ENCODE measurements at regions of chr19 and their contacts with region 1.

Region 1: GRCh38 chr19:18636183-18636968 is 452 bp upstream of the KLHL26 start:
- DNase-seq: peak; percentile 98 to 100 (median 99)
- ATAC-seq: peak; percentile 86
- H3K4me3 ChIP-seq: peak overlapping the region; percentile 81
- H3K4me3 Mint-ChIP-seq: peak overlapping the region; percentile 91
- H3K27ac ChIP-seq: peak overlapping the region; percentile 39 to 72
- H3K27ac Mint-ChIP-seq: peak overlapping the region; percentile 83
- H3K4me1 ChIP-seq: peaks cover 34% of the 10 kb centered on the region
- H3K4me1 Mint-ChIP-seq: peaks cover 35% of the 10 kb centered on the region
- H3K27me3 ChIP-seq: no peaks in the 10 kb centered on the region
- H3K27me3 Mint-ChIP-seq: no peaks in the 10 kb centered on the region
- CTCF ChIP-seq: no peak

Region 2: GRCh38 chr19:18529782-18530181 is 106.6 kb before region 1 on chr19:
- CTCF ChIA-PET with region 1: no interaction called
- POLR2A ChIA-PET with region 1: no interaction called
- intact Hi-C with region 1: no loop called
- DNase-seq: no peak
- ATAC-seq: no peak
- H3K4me3 ChIP-seq: no peak overlapping the region
- H3K4me3 Mint-ChIP-seq: no peak overlapping the region
- H3K27ac ChIP-seq: no peak overlapping the region
- H3K27ac Mint-ChIP-seq: no peak overlapping the region
- H3K4me1 ChIP-seq: no peaks in the 10 kb centered on the region
- H3K4me1 Mint-ChIP-seq: no peaks in the 10 kb centered on the region
- H3K27me3 ChIP-seq: no peaks in the 10 kb centered on the region
- H3K27me3 Mint-ChIP-seq: no peaks in the 10 kb centered on the region
- CTCF ChIP-seq: no peak

Region 3: GRCh38 chr19:18571564-18572300 is 64.6 kb before region 1 on chr19 and contains the start of gene UBA52:
- CTCF ChIA-PET with region 1: no interaction called
- POLR2A ChIA-PET with region 1: no interaction called
- intact Hi-C with region 1: loop called in 1 of 2 experiments (anchors 2 kb)
- DNase-seq: peak; percentile 96 to 100 (median 98)
- ATAC-seq: peak; percentile 91
- H3K4me3 ChIP-seq: peak within 1 kb of the TSS; percentile 97
- H3K4me3 Mint-ChIP-seq: peak within 1 kb of the TSS; percentile 91
- H3K27ac ChIP-seq: peak within 1 kb of the TSS; percentile 89 to 94
- H3K27ac Mint-ChIP-seq: peak within 1 kb of the TSS; percentile 93
- H3K4me1 ChIP-seq: peaks cover 28% of the 10 kb centered on the region
- H3K4me1 Mint-ChIP-seq: peaks cover 20% of the 10 kb centered on the region
- H3K27me3 ChIP-seq: no peaks in the 10 kb centered on the region
- H3K27me3 Mint-ChIP-seq: no peaks in the 10 kb centered on the region
- CTCF ChIP-seq: no peak
- total RNA-seq, gene UBA52: 2,255 to 2,378 TPM

Region 4: DNA sequence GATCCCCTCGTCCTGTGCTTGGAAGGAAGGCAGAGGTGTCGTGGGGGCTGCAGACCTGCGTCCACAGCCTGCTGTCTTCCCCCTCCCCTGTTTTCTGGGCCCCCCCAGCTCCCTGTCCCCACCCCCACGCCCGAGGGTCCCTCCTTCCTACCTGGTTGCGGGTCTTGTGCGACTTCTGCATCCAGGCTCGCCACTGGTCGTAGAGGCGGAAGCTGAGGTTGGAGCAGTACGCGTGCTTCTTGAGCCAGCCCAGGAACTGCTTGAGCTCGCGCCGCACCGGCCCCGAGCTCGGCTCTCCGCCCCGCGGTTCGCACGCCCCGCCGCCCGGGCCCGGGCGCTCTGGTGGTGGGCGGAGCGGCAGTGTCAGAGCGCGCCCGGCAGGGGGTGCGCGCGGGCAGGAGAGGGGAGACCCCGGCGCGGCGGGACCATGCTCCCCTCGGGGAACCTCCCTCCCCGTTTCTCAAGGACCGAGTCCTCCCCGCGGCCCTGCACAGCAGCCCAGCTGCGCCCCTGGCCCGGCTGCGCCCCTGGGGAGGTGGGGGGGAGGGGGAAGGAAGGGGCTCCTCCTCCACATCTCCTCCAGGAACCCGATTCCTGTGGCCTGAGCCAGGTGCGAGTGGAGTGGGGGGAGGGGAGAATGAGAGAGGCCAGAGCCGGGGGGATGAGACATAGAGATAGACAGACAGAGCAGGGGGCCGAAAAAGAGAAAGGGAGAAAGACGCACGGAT is 42.1 kb before region 1 on chr19:
- CTCF ChIA-PET with region 1: interaction called, 4 read pairs
- POLR2A ChIA-PET with region 1: interaction called, 10 read pairs
- intact Hi-C with region 1: loop called in 1 of 2 experiments (anchors 1 kb)
- DNase-seq: peak; percentile 59 to 91 (median 70)
- ATAC-seq: peak; percentile 74
- H3K4me3 ChIP-seq: peak overlapping the region; percentile 52
- H3K4me3 Mint-ChIP-seq: peak overlapping the region; percentile 63
- H3K27ac ChIP-seq: no peak overlapping the region
- H3K27ac Mint-ChIP-seq: peak overlapping the region; percentile 42
- H3K4me1 ChIP-seq: peaks cover 40% of the 10 kb centered on the region
- H3K4me1 Mint-ChIP-seq: peaks cover 25% of the 10 kb centered on the region
- H3K27me3 ChIP-seq: peaks cover 3 to 8% of the 10 kb centered on the region in 2 experiments
- H3K27me3 Mint-ChIP-seq: peaks cover 4% of the 10 kb centered on the region
- CTCF ChIP-seq: peak; percentile 73

Region 5: DNA sequence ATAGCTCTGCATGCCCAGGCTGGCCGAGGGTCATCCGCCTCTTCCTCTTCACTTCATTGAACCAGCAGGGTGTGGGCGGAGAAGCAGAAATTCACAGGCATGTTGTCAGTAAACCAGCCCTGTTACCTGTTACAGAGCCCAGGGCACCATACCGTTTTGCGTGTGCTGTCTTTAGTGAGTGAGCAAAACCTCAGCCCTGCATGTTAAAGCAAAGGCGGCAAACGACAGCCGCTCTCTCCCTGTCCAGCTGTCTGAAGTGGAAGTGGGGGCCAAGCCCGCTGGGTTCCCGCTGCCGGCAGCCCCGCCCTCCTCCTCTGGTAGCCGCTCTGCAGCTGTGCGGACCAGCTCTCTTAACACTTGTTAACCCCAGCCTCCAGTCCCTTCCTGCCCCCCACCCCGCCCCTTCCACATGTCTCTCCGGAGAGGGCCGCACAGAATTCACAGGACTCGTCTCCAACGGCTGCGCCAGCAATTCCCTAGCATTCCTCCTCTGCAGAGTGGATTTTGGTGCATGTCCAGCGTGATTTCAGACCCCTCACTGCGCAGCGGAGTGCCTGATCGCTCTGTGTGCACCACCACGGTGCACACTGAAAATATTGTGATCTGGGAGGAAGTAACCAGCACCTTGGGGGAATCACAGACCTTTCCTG is 13.1 kb after region 1 on chr19:
- CTCF ChIA-PET with region 1: no interaction called
- POLR2A ChIA-PET with region 1: no interaction called
- intact Hi-C with region 1: no loop called
- DNase-seq: no peak
- ATAC-seq: no peak
- H3K4me3 ChIP-seq: no peak overlapping the region
- H3K4me3 Mint-ChIP-seq: peak overlapping the region; percentile 20
- H3K27ac ChIP-seq: no peak overlapping the region
- H3K27ac Mint-ChIP-seq: no peak overlapping the region
- H3K4me1 ChIP-seq: peaks cover 9% of the 10 kb centered on the region
- H3K4me1 Mint-ChIP-seq: peaks cover 19% of the 10 kb centered on the region
- H3K27me3 ChIP-seq: no peaks in the 10 kb centered on the region
- H3K27me3 Mint-ChIP-seq: no peaks in the 10 kb centered on the region
- CTCF ChIP-seq: no peak

Region 6: DNA sequence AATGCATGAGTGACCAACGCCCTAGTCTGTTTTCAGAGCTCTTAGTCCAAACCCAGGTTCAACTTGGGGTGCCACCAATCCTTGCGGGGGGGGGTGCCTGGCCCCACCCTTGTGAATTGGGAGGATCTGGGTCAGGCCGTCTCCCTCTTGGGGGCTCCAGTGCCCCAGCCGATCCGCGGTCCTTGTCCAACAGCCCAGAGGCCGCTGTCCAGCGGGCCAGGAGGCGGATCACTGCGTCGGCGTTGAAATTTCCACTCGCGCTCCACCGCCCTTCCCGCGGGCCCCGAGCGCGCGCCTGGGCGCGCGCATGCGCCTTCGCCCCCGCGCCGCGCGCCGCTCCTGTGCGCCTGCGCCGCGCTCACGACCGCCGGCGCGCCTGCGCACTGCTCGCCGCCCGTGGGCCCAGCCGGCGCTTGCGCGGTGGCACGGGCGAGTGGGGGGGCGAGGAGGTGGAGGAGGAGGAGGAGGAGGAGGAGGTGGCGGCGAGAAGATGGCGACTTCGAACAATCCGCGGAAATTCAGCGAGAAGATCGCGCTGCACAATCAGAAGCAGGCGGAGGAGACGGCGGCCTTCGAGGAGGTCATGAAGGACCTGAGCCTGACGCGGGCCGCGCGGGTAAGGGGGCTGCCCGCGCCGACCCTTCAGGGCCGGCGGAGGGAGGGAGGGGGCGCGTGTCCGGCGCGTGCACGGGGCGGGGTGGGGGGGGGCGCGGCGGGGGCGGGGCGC is 47.0 kb after region 1 on chr19 and contains the start of gene CRTC1:
- CTCF ChIA-PET with region 1: no interaction called
- POLR2A ChIA-PET with region 1: no interaction called
- intact Hi-C with region 1: loop called in 1 of 2 experiments (anchors 1 kb)
- DNase-seq: peak; percentile 92 to 97 (median 94)
- ATAC-seq: peak; percentile 86
- H3K4me3 ChIP-seq: peak within 1 kb of the TSS; percentile 76
- H3K4me3 Mint-ChIP-seq: peak within 1 kb of the TSS; percentile 92
- H3K27ac ChIP-seq: peak within 1 kb of the TSS; percentile 29 to 65
- H3K27ac Mint-ChIP-seq: peak within 1 kb of the TSS; percentile 77
- H3K4me1 ChIP-seq: peaks cover 30% of the 10 kb centered on the region
- H3K4me1 Mint-ChIP-seq: peaks cover 36% of the 10 kb centered on the region
- H3K27me3 ChIP-seq: no peaks in the 10 kb centered on the region
- H3K27me3 Mint-ChIP-seq: no peaks in the 10 kb centered on the region
- CTCF ChIP-seq: no peak
- total RNA-seq, gene CRTC1: 11.8 to 12.2 TPM

Region 7: GRCh38 chr19:18700501-18701249 is 64.3 kb after region 1 on chr19:
- CTCF ChIA-PET with region 1: no interaction called
- POLR2A ChIA-PET with region 1: no interaction called
- intact Hi-C with region 1: loop called in 1 of 2 experiments (anchors 5 kb)
- DNase-seq: peak; percentile 59 to 81 (median 70)
- ATAC-seq: peak; percentile 97
- H3K4me3 ChIP-seq: peak overlapping the region; percentile 66
- H3K4me3 Mint-ChIP-seq: peak overlapping the region; percentile 91
- H3K27ac ChIP-seq: peak overlapping the region; percentile 59 to 87
- H3K27ac Mint-ChIP-seq: peak overlapping the region; percentile 88
- H3K4me1 ChIP-seq: peaks cover 43% of the 10 kb centered on the region
- H3K4me1 Mint-ChIP-seq: peaks cover 42% of the 10 kb centered on the region
- H3K27me3 ChIP-seq: no peaks in the 10 kb centered on the region
- H3K27me3 Mint-ChIP-seq: no peaks in the 10 kb centered on the region
- CTCF ChIP-seq: no peak

Region 8: GRCh38 chr19:18831524-18832305 is 195.3 kb after region 1 on chr19 and contains the start of gene UPF1:
- CTCF ChIA-PET with region 1: no interaction called
- POLR2A ChIA-PET with region 1: no interaction called
- intact Hi-C with region 1: loop called in 1 of 2 experiments (anchors 5 kb)
- DNase-seq: peak; percentile 90 to 99 (median 96)
- ATAC-seq: peak; percentile 75
- H3K4me3 ChIP-seq: peak within 1 kb of the TSS; percentile 64
- H3K4me3 Mint-ChIP-seq: peak within 1 kb of the TSS; percentile 89
- H3K27ac ChIP-seq: peak within 1 kb of the TSS; percentile 64 to 81
- H3K27ac Mint-ChIP-seq: peak within 1 kb of the TSS; percentile 88
- H3K4me1 ChIP-seq: peaks cover 45% of the 10 kb centered on the region
- H3K4me1 Mint-ChIP-seq: peaks cover 39% of the 10 kb centered on the region
- H3K27me3 ChIP-seq: no peaks in the 10 kb centered on the region
- H3K27me3 Mint-ChIP-seq: no peaks in the 10 kb centered on the region
- CTCF ChIP-seq: no peak
- total RNA-seq, gene UPF1: 146 to 150 TPM

Region 9: DNA sequence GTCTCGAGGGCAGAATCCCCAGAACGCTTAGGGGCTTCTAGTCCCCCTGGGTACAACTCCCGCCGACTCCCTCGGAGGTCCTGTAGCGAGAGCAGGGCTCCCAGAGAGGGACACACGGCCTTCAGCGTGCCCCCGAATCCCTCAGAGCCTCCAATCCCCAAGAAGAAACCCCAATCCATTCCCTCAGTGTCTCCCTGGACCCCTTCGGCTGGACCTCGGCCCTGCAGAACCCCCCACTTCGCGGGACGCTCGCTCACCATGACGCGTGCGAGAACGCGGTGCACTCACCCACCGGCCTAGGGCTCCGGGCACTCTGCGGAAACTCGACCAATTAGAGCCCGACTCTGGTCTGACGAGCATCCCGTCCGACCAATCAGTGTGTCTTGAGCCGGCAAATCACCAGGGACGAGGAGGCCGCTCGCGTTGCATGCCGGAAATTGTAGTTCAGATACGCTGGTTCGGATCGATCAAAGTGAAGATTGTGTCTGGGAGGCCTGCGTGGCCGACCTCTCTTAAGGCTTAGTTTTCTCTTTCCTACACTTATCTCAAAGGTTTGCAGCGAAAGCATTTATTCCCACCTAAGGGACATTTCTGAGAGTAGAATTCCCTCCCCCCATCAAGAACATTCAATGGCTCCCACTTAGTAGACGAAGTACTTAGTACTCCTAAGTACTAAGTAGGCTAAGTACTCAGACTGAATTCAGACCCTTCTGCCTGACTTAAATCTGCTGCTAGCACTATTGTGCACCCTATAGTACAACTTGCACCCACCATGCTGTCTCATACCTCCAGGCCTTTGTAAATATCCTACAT is 502.0 kb after region 1 on chr19 and contains the start of gene TMEM161A:
- CTCF ChIA-PET with region 1: no interaction called
- POLR2A ChIA-PET with region 1: no interaction called
- intact Hi-C with region 1: loop called in 1 of 2 experiments (anchors 5 kb)
- DNase-seq: peak; percentile 90 to 98 (median 94)
- ATAC-seq: peak; percentile 99
- H3K4me3 ChIP-seq: peak within 1 kb of the TSS; percentile 93
- H3K4me3 Mint-ChIP-seq: peak within 1 kb of the TSS; percentile 95
- H3K27ac ChIP-seq: peak within 1 kb of the TSS in 1 of 2 donors; percentile 46
- H3K27ac Mint-ChIP-seq: peak within 1 kb of the TSS; percentile 65
- H3K4me1 ChIP-seq: peaks cover 31% of the 10 kb centered on the region
- H3K4me1 Mint-ChIP-seq: peaks cover 28% of the 10 kb centered on the region
- H3K27me3 ChIP-seq: no peaks in the 10 kb centered on the region
- H3K27me3 Mint-ChIP-seq: no peaks in the 10 kb centered on the region
- CTCF ChIP-seq: no peak
- total RNA-seq, gene TMEM161A: 8.2 to 10.9 TPM

Measured in CD4-positive, alpha-beta T cell (primary cell).